ENCODE measurements at regions of chr4 and their contacts with region 1.

Region 1: DNA sequence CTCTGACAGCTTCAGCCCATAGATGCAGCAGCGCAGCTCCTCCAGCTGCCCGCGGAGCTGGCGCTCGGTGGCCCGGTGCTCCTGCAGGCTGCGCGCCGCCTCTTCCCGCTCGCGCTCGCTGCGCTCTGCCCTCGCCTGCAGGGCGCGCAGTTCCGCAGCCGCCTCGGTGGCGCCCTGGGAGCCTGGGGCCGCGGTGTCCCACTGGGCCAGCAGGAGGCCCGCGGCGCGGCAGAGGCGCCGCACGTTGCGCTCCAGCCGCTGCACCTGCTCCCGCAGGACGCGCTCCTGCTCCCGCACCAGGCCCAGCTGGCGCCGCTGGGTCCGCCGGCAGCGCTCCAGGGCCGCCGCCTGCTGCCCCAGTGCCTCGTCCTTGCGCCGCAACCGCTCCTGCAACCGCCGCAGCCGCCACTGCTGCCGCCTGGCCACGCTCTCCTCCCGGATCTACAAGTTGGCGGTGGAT is 10.1 kb downstream of the C4orf50 start:
- DNase-seq: no peak
- H3K4me3 ChIP-seq: no peak overlapping the region
- H3K27ac ChIP-seq: no peak overlapping the region
- H3K4me1 ChIP-seq: no peaks in the 10 kb centered on the region
- H3K27me3 ChIP-seq: no peaks in the 10 kb centered on the region
- CTCF ChIP-seq: no peak

Region 2: DNA sequence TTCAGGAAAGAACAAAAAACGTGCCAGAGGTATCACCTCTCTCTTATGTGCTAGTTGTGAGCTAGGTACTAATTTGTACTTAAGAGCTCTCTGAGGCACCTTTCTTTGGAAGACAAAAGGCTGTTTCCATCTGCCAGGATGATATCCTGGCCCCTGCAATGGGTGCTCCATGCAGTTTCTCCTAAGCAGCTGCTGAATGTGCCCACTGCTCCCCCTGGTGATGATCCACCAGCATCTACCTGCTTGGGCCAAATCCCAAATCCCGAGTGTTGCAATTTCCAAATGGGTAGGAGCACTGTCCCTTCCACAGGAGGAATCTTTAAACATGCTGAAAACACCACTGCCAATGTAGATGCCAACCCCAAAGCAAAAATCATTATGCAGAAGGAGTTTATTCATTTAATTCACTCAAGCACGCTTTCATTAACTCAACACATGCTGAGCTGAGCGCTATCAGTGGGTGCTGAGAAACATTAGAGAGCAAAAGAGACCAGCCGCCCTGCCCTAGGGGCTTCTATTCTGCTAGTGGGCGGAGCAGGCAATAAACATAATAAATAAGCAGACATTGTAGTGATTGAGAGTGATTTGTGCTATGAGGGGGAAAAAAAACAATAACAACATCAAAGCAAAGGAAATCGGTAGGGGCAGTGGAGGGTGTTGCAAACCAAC is 79.7 kb after region 1 on chr4:
- intact Hi-C with region 1: loop called (anchors 10 kb)
- DNase-seq: no peak
- H3K4me3 ChIP-seq: no peak overlapping the region
- H3K27ac ChIP-seq: no peak overlapping the region
- H3K4me1 ChIP-seq: no peaks in the 10 kb centered on the region
- H3K27me3 ChIP-seq: no peaks in the 10 kb centered on the region
- CTCF ChIP-seq: no peak